ENCODE measurements at regions of chr22 and their contacts with region 1.

Region 1: DNA sequence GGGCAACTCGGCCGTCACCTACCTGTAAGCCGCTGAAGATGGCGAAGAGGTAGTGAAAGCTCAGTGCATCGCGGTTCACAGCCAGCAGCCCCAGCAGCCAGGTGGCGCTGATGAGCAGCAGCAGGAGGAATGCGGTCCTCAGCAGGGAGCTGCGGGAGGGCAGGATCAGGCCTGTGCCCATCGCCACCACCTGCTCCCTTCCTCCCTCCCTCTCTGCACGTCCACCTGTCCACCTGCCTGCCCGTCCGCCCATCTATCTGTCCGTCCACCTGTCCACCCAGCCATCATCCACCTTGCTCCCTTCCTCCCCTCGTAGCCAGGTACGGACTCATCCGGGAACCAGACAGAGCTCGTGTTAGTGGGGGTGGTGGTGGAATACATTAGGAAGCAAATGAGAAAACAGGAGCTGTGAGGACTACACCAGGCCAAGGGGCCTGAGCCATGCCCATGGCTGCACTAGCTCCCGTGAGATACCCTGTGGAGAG is 32.2 kb downstream of the TRMU start:
- DNase-seq: no peak
- H3K4me3 ChIP-seq: no peak overlapping the region
- H3K27ac ChIP-seq: no peak overlapping the region
- H3K4me1 ChIP-seq: no peaks in the 10 kb centered on the region
- H3K27me3 ChIP-seq: no peaks in the 10 kb centered on the region
- CTCF ChIP-seq: peak; percentile 29 to 76 (median 63)
- POLR2A ChIP-seq: no peak

Region 2: GRCh38 chr22:46150034-46150654 is 217.6 kb before region 1 on chr22 and contains the start of gene PPARA:
- intact Hi-C with region 1: no loop called
- DNase-seq: peak; percentile 86 to 90
- H3K4me3 ChIP-seq: peak within 1 kb of the TSS; percentile 96 to 98
- H3K27ac ChIP-seq: peak within 1 kb of the TSS; percentile 90 to 94
- H3K4me1 ChIP-seq: peaks cover 0 to 8% of the 10 kb centered on the region in 2 donors
- H3K27me3 ChIP-seq: no peaks in the 10 kb centered on the region
- CTCF ChIP-seq: no peak
- POLR2A ChIP-seq: peak in 1 of 2 donors; percentile 71
- total RNA-seq, gene PPARA: 1.8 to 24.8 (median 14.0) TPM

Region 3: GRCh38 chr22:46296257-46297150 is 71.2 kb before region 1 on chr22 and contains the start of gene GTSE1:
- intact Hi-C with region 1: no loop called
- DNase-seq: peak; percentile 96 to 97
- H3K4me3 ChIP-seq: peak within 1 kb of the TSS; percentile 58 to 65
- H3K27ac ChIP-seq: peak within 1 kb of the TSS; percentile 84 to 85
- H3K4me1 ChIP-seq: peaks cover 0 to 10% of the 10 kb centered on the region in 2 donors
- H3K27me3 ChIP-seq: no peaks in the 10 kb centered on the region
- CTCF ChIP-seq: peak; percentile 15 to 45 (median 28)
- POLR2A ChIP-seq: peak; percentile 9 to 47
- total RNA-seq, gene GTSE1: 0.21 to 6.9 TPM in 2 of 4 donors, not detected in the others

Region 4: GRCh38 chr22:46335201-46336118 is 32.3 kb before region 1 on chr22 and contains the start of gene TRMU:
- intact Hi-C with region 1: no loop called
- DNase-seq: peak; percentile 75 to 84
- H3K4me3 ChIP-seq: peak within 1 kb of the TSS; percentile 88
- H3K27ac ChIP-seq: peak within 1 kb of the TSS; percentile 87 to 91
- H3K4me1 ChIP-seq: peaks cover 0 to 8% of the 10 kb centered on the region in 2 donors
- H3K27me3 ChIP-seq: no peaks in the 10 kb centered on the region
- CTCF ChIP-seq: peak in 1 of 4 experiments; percentile 26
- POLR2A ChIP-seq: peak; percentile 20 to 54
- total RNA-seq, gene TRMU: 14.1 to 52.5 (median 31.2) TPM

Region 5: GRCh38 chr22:46542011-46542985 is 174.5 kb after region 1 on chr22:
- intact Hi-C with region 1: loop called (anchors 10 kb)
- DNase-seq: peak; percentile 40 to 60
- H3K4me3 ChIP-seq: no peak overlapping the region
- H3K27ac ChIP-seq: peak overlapping the region in 1 of 2 donors; percentile 27
- H3K4me1 ChIP-seq: peaks cover 0 to 14% of the 10 kb centered on the region in 2 donors
- H3K27me3 ChIP-seq: no peaks in the 10 kb centered on the region
- CTCF ChIP-seq: peak; percentile 76 to 96 (median 89)
- POLR2A ChIP-seq: no peak

Measured in uterus (tissue), 4 donors.